ENCODE measurements at regions of chr7 and their contacts with region 1.

Region 1: GRCh38 chr7:19665399-19666008 is 43.3 kb downstream of the POLR1F start:
- DNase-seq: no peak
- H3K4me3 ChIP-seq: no peak overlapping the region
- H3K4me3 Mint-ChIP-seq: no peak overlapping the region
- H3K27ac ChIP-seq: no peak overlapping the region
- H3K27ac Mint-ChIP-seq: no peak overlapping the region
- H3K4me1 ChIP-seq: no peaks in the 10 kb centered on the region
- H3K4me1 Mint-ChIP-seq: peaks cover 3% of the 10 kb centered on the region
- H3K27me3 ChIP-seq: no peaks in the 10 kb centered on the region
- H3K27me3 Mint-ChIP-seq: peaks cover 0 to 3% (median 2%) of the 10 kb centered on the region in 3 donors
- CTCF ChIP-seq: peak; percentile 73

Region 2: GRCh38 chr7:17680943-17681351 is 1984.6 kb before region 1 on chr7:
- intact Hi-C with region 1: loop called in 1 of 2 experiments (anchors 10 kb)
- DNase-seq: peak in 2 of 3 donors; percentile 21 to 30
- H3K4me3 ChIP-seq: no peak overlapping the region
- H3K4me3 Mint-ChIP-seq: no peak overlapping the region
- H3K27ac ChIP-seq: no peak overlapping the region
- H3K27ac Mint-ChIP-seq: peak overlapping the region in 5 of 7 donors; percentile 72 to 91 (median 86)
- H3K4me1 ChIP-seq: peaks cover 8 to 14% of the 10 kb centered on the region in 2 donors
- H3K4me1 Mint-ChIP-seq: peaks cover 10% of the 10 kb centered on the region
- H3K27me3 ChIP-seq: no peaks in the 10 kb centered on the region
- H3K27me3 Mint-ChIP-seq: no peaks in the 10 kb centered on the region
- CTCF ChIP-seq: peak; percentile 82